ENCODE measurements at regions of chr2 and their contacts with region 1.

Region 1: GRCh38 chr2:100518801-100519200 is 44.0 kb upstream of the PDCL3 start:
- DNase-seq: no peak
- ATAC-seq: no peak
- H3K4me3 ChIP-seq: no peak overlapping the region
- H3K27ac ChIP-seq: no peak overlapping the region
- H3K4me1 ChIP-seq: no peaks in the 10 kb centered on the region
- H3K27me3 ChIP-seq: peaks cover 0 to 21% of the 10 kb centered on the region in 2 experiments; a peak in 3 of 5 replicates
- CTCF ChIP-seq: no peak
- EP300 ChIP-seq: no peak
- POLR2A ChIP-seq: no peak
- RAD21 ChIP-seq: no peak

Region 2: GRCh38 chr2:99430614-99431291 is 1088.0 kb before region 1 on chr2:
- CTCF ChIA-PET with region 1: no interaction called
- POLR2A ChIA-PET with region 1: no interaction called
- in situ Hi-C with region 1: no loop called
- intact Hi-C with region 1: loop called (anchors 5 kb)
- DNase-seq: no peak
- ATAC-seq: no peak
- H3K4me3 ChIP-seq: no peak overlapping the region
- H3K27ac ChIP-seq: no peak overlapping the region
- H3K4me1 ChIP-seq: no peaks in the 10 kb centered on the region
- H3K27me3 ChIP-seq: no peaks in the 10 kb centered on the region
- CTCF ChIP-seq: no peak
- EP300 ChIP-seq: no peak
- POLR2A ChIP-seq: no peak
- RAD21 ChIP-seq: no peak